ENCODE measurements at regions of chr14 and their contacts with region 1.

Region 1: GRCh38 chr14:57317316-57317715 is 48.5 kb downstream of the AP5M1 start:
- DNase-seq: peak; percentile 55
- CTCF ChIP-seq: peak; percentile 75

Region 2: GRCh38 chr14:56491299-56492285 is 825.7 kb before region 1 on chr14:
- in situ Hi-C with region 1: loop called (anchors 25 kb)
- DNase-seq: no peak
- CTCF ChIP-seq: peak; percentile 58

Region 3: DNA sequence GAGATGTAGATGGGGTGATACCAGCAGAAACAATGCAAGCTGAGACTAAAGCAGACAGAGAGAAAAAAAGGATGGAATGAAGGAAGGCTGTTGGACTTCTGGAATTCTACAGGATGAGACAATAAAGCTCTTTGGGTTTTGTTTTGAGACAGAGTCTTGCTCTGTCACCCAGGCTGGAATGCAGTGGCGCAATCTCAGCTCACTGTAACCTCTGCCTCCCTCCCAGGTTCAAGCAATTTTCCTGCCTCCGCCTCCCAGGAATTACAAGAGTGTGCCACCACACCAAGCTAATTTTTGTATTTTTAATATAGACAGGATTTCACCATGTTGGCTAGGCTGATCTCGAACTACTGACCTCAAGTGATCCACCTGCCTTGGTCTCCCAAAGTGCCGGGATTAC is 164.0 kb before region 1 on chr14:
- in situ Hi-C with region 1: no loop called
- DNase-seq: no peak
- CTCF ChIP-seq: no peak